Right ventricle myocardium inferior (tissue), 1 donor: ENCODE measurements at regions of chr3 and their contacts with region 1.

Region 1: GRCh38 chr3:105686278-105686897 is 182.4 kb downstream of the CBLB start:
- DNase-seq: no peak
- ATAC-seq: no peak

Region 2: GRCh38 chr3:105730801-105731354 is 44.5 kb after region 1 on chr3:
- intact Hi-C with region 1: no loop called
- DNase-seq: no peak
- ATAC-seq: no peak

Region 3: GRCh38 chr3:106609666-106610301 is 923.4 kb after region 1 on chr3:
- intact Hi-C with region 1: loop called (anchors 5 kb)
- DNase-seq: no peak
- ATAC-seq: peak; percentile 79